ENCODE measurements at regions of chr15 and their contacts with region 1.

Region 1: DNA sequence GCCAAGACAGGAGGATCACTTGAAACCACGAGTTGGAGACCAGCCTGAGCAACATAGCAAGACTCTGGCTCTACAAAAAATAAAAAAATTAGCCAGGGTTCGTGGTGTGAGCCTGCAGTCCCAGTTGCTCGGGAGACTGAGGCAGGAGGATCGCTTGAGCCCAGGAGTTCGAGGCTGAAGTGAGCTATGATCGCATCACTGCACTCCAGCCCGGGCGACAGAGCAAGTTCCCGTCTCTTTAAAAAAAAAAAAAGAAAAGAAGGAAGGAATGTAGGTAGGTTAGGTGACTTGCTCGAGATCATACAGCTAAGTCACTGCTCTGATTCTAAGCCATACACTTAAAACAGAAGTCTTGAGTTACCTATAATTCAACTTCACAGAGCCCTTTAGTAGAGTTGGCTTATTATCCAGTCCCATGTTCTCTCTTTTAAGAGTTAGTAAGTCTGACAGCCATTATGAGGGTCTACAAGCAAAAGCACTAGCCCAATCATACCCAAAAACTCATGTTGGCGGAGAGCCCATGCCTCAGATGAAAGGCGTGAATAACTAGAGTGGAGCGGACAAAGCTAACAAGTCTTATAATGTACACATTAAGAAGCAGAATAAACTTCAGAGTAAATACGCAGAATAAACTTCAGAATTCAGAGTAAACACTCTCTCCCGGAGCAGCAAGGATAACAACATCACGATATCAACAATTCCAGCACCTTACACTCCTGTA is 784 bp downstream of the AAGAB start:
- DNase-seq: no peak
- H3K4me3 ChIP-seq: peak overlapping the region; percentile 95
- H3K4me3 Mint-ChIP-seq: peak overlapping the region; percentile 98
- H3K27ac Mint-ChIP-seq: peak overlapping the region; percentile 98
- H3K4me1 ChIP-seq: no peaks in the 10 kb centered on the region; the same call in 1 of the 2 replicates
- H3K4me1 Mint-ChIP-seq: peaks cover 6% of the 10 kb centered on the region
- H3K27me3 ChIP-seq: no peaks in the 10 kb centered on the region
- H3K27me3 Mint-ChIP-seq: no peaks in the 10 kb centered on the region
- CTCF ChIP-seq: no peak

Region 2: GRCh38 chr15:66661432-66662096 is 592.1 kb before region 1 on chr15:
- CTCF ChIA-PET with region 1: no interaction called
- POLR2A ChIA-PET with region 1: interaction called, 15 read pairs
- intact Hi-C with region 1: no loop called
- DNase-seq: no peak
- H3K4me3 ChIP-seq: no peak overlapping the region
- H3K4me3 Mint-ChIP-seq: no peak overlapping the region
- H3K27ac Mint-ChIP-seq: no peak overlapping the region
- H3K4me1 ChIP-seq: no peaks in the 10 kb centered on the region
- H3K4me1 Mint-ChIP-seq: no peaks in the 10 kb centered on the region
- H3K27me3 ChIP-seq: no peaks in the 10 kb centered on the region
- H3K27me3 Mint-ChIP-seq: no peaks in the 10 kb centered on the region
- CTCF ChIP-seq: no peak

Region 3: GRCh38 chr15:67024314-67024997 is 229.2 kb before region 1 on chr15:
- CTCF ChIA-PET with region 1: no interaction called
- POLR2A ChIA-PET with region 1: no interaction called
- intact Hi-C with region 1: no loop called
- DNase-seq: peak; percentile 66
- H3K4me3 ChIP-seq: no peak overlapping the region
- H3K4me3 Mint-ChIP-seq: no peak overlapping the region
- H3K27ac Mint-ChIP-seq: peak overlapping the region; percentile 10
- H3K4me1 ChIP-seq: peaks cover 12% of the 10 kb centered on the region
- H3K4me1 Mint-ChIP-seq: peaks cover 18% of the 10 kb centered on the region
- H3K27me3 ChIP-seq: no peaks in the 10 kb centered on the region
- H3K27me3 Mint-ChIP-seq: no peaks in the 10 kb centered on the region
- CTCF ChIP-seq: no peak

Measured in Caco-2 (cell line).